GM12878 (cell line): ENCODE measurements at regions of chr15 and their contacts with region 1.

Region 1: DNA sequence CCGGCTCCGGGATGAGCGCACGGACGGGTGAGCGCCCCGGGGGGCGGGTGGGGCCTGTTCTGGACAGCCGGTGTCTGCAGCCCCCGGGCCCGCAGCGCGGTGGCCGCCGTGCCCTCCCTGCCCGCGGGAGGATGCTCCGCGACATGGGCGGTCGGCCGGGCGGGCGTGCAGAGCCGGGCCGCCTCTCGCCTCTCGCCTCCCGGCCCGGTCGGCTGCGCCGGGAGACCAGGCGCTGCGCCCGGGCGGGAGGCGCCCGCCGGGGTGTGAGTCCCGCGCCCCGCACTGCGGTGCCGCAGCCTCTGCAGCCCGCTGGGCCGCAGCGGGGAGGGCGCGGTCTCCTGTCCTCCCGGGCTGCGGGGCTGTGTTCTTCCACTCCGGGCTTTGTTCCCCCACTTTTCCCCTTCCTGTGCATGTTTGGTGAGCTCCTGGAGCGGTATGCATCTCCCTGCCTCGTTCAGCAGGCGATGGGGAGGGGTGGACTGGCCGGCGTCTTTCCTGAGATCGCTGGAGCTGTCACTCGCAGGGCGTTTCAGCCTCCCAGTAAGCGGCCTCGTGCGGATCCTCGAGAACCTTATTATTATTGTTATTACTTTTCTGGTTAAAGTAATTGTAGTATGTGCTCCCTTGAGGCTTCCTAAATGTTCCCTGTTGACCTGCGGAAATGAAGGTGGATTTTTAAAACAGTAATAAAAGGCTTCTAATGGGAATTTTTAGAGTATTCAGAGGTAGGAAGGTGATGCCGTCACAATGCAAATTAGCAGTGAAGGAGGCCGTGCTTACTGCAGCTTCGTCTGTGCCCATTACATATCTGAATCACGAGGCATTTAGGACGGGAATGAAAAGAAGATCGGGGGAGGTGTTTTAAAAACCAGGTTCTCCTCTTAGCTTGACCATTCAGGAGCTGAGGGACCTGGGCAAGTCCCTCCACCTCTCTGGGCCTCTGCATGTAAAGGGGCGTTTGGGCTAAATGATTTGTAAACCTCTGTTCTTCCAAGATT is 588 bp downstream of the TMOD2 start:
- DNase-seq: no peak
- ATAC-seq: peak; percentile 54
- H3K4me3 ChIP-seq: peak overlapping the region; percentile 89
- H3K27ac ChIP-seq: no peak overlapping the region
- H3K4me1 ChIP-seq: no peaks in the 10 kb centered on the region
- H3K27me3 ChIP-seq: peaks cover 0 to 2% of the 10 kb centered on the region in 2 experiments; a peak in 1 of 4 replicates
- CTCF ChIP-seq: no peak
- EP300 ChIP-seq: no peak
- POLR2A ChIP-seq: no peak
- RAD21 ChIP-seq: no peak

Region 2: DNA sequence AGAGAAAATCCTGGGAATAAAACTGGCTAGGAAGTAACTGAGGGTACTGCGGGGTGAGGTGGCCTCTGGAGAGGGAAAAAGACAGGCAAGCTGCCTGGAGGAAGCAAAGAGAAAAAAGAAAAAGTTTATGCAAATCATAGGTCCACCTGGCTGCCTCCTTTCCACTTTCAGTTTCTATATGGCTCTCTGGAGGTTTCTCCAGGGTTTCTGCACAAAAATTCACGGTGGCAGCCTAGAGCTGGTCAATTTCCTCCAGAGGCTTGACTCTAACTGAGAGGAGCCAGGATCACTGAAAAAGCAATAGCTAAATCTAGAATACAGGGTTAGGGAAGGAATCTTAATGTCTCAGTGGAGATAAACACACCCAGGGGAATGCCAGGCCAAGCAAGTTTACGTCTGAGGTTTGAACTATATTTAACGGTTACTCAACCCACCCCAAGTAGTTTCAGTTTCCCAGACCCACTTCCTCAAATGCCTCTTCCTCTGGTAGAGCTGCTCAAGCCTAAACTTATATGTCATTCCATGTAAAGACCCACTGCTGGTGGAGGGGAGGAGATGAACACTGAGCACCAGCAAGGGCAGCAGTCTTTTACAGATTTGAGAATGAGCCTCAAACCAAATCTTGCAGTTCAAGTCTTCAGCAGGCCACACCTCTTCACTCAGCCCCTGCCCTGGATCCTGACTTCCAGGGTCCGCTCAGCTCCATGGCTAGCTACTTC is 20.3 kb before region 1 on chr15:
- CTCF ChIA-PET with region 1: no interaction called
- POLR2A ChIA-PET with region 1: no interaction called
- RAD21 ChIA-PET with region 1: interaction called, 7 read pairs
- SMC1A ChIA-PET with region 1: interaction called, 5 read pairs
- in situ Hi-C with region 1: no loop called
- intact Hi-C with region 1: loop called (anchors 2 kb)
- DNase-seq: peak; percentile 90
- ATAC-seq: peak; percentile 61
- H3K4me3 ChIP-seq: peak overlapping the region; percentile 63
- H3K27ac ChIP-seq: peak overlapping the region; percentile 94
- H3K4me1 ChIP-seq: peaks cover 57% of the 10 kb centered on the region
- H3K27me3 ChIP-seq: no peaks in the 10 kb centered on the region
- CTCF ChIP-seq: no peak
- EP300 ChIP-seq: peak; percentile 49 to 70; a peak in 3 of 4 replicates
- POLR2A ChIP-seq: 0 out of 2 replicates have a peak, but pooled peaks have one; percentile 38
- RAD21 ChIP-seq: no peak; the same call in 1 of the 2 replicates